CD8-positive, alpha-beta T cell (primary cell): ENCODE measurements at regions of chr14 and their contacts with region 1.

Region 1: GRCh38 chr14:23320774-23321571 is at the start of gene PABPN1:
- DNase-seq: peak; percentile 93 to 100 (median 97)
- ATAC-seq: peak; percentile 85
- H3K4me3 ChIP-seq: peak within 1 kb of the TSS; percentile 67 to 79
- H3K4me3 Mint-ChIP-seq: peak within 1 kb of the TSS; percentile 91
- H3K27ac ChIP-seq: peak within 1 kb of the TSS; percentile 80 to 96
- H3K27ac Mint-ChIP-seq: peak within 1 kb of the TSS; percentile 99
- H3K4me1 ChIP-seq: peaks cover 23% of the 10 kb centered on the region
- H3K4me1 Mint-ChIP-seq: peaks cover 29% of the 10 kb centered on the region
- H3K27me3 ChIP-seq: no peaks in the 10 kb centered on the region
- H3K27me3 Mint-ChIP-seq: no peaks in the 10 kb centered on the region
- CTCF ChIP-seq: no peak
- total RNA-seq, gene PABPN1: 186 to 191 TPM

Region 2: GRCh38 chr14:22766456-22767322 is 554.3 kb before region 1 on chr14 and contains the start of gene OXA1L:
- CTCF ChIA-PET with region 1: no interaction called
- POLR2A ChIA-PET with region 1: no interaction called
- intact Hi-C with region 1: loop called in 1 of 2 experiments (anchors 10 kb)
- DNase-seq: peak; percentile 88 to 99 (median 97)
- ATAC-seq: peak; percentile 92
- H3K4me3 ChIP-seq: peak within 1 kb of the TSS; percentile 93 to 99
- H3K4me3 Mint-ChIP-seq: peak within 1 kb of the TSS; percentile 94
- H3K27ac ChIP-seq: peak within 1 kb of the TSS; percentile 84 to 93
- H3K27ac Mint-ChIP-seq: peak within 1 kb of the TSS; percentile 96
- H3K4me1 ChIP-seq: peaks cover 22% of the 10 kb centered on the region
- H3K4me1 Mint-ChIP-seq: peaks cover 34% of the 10 kb centered on the region
- H3K27me3 ChIP-seq: no peaks in the 10 kb centered on the region
- H3K27me3 Mint-ChIP-seq: no peaks in the 10 kb centered on the region
- CTCF ChIP-seq: no peak
- total RNA-seq, gene OXA1L: 186 to 192 TPM

Region 3: DNA sequence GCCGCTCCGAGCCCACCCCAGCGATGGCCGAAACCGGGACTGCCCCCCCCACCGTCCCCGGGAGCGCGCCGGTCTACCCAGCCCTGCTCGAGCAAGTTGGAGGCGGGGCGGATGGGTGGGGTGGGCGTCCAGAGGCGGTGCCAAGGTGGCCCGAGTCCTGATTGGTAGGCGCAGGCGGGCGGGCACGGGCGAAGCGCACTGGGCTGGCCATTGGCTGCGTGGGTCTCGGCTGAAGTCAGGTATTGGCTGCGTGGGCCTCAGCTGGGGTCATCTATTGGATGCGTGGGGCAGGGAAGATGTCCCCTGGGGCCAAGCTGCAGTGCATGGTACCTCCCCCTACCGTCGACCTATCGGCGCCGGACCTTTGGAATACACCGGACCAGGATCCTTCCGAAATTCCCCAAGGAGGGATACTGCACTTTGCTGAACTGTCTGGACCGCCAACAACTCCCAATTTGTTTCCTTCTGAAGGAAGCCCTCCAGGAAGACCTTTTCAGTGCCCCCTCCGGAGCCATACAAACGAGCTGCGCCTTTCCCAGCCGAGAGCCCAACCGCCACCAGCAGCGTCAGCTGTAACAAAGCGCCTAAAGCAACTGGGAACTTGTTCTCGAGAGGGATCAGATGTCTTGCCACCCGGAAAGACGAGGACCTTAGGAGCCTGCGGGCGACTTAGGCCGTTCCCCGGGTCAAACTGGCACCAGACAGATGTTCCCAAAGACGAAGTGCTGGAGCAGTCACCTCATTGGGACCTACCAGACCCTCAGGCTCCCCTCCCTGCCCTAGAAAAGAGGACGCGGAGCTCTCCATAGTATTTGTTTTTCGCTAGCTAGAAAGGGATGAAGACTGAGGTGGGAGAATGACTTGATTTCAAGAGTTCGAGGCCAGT is 34.7 kb before region 1 on chr14 and contains the start of gene HOMEZ:
- CTCF ChIA-PET with region 1: interaction called, 7 read pairs
- POLR2A ChIA-PET with region 1: interaction called, 34 read pairs
- intact Hi-C with region 1: loop called (anchors 1 kb)
- DNase-seq: peak; percentile 94 to 98 (median 97)
- ATAC-seq: peak; percentile 96
- H3K4me3 ChIP-seq: peak within 1 kb of the TSS; percentile 89 to 94
- H3K4me3 Mint-ChIP-seq: peak within 1 kb of the TSS; percentile 99
- H3K27ac ChIP-seq: peak within 1 kb of the TSS; percentile 67 to 83
- H3K27ac Mint-ChIP-seq: peak within 1 kb of the TSS; percentile 96
- H3K4me1 ChIP-seq: peaks cover 20% of the 10 kb centered on the region
- H3K4me1 Mint-ChIP-seq: peaks cover 36% of the 10 kb centered on the region
- H3K27me3 ChIP-seq: no peaks in the 10 kb centered on the region
- H3K27me3 Mint-ChIP-seq: no peaks in the 10 kb centered on the region
- CTCF ChIP-seq: no peak
- total RNA-seq, gene HOMEZ: 3.1 to 4.0 TPM

Region 4: GRCh38 chr14:23306410-23307145 is 14.4 kb before region 1 on chr14 and contains the start of gene BCL2L2:
- CTCF ChIA-PET with region 1: interaction called, 53 read pairs
- POLR2A ChIA-PET with region 1: interaction called, 202 read pairs
- intact Hi-C with region 1: loop called (anchors 1 kb)
- DNase-seq: peak in 3 of 9 experiments; percentile 25 to 45 (median 27)
- ATAC-seq: no peak
- H3K4me3 ChIP-seq: peak within 1 kb of the TSS in 1 of 2 experiments; percentile 23
- H3K4me3 Mint-ChIP-seq: no peak within 1 kb of the TSS
- H3K27ac ChIP-seq: peak within 1 kb of the TSS in 1 of 2 experiments; percentile 52
- H3K27ac Mint-ChIP-seq: no peak within 1 kb of the TSS
- H3K4me1 ChIP-seq: peaks cover 6% of the 10 kb centered on the region
- H3K4me1 Mint-ChIP-seq: peaks cover 8% of the 10 kb centered on the region
- H3K27me3 ChIP-seq: peaks cover 0 to 3% of the 10 kb centered on the region in 2 experiments
- H3K27me3 Mint-ChIP-seq: peaks cover 28% of the 10 kb centered on the region
- CTCF ChIP-seq: no peak
- total RNA-seq, gene BCL2L2: 1.4 to 1.8 TPM

Region 5: GRCh38 chr14:23345987-23346692 is 25.2 kb after region 1 on chr14:
- CTCF ChIA-PET with region 1: no interaction called
- POLR2A ChIA-PET with region 1: no interaction called
- intact Hi-C with region 1: no loop called
- DNase-seq: no peak
- ATAC-seq: no peak
- H3K4me3 ChIP-seq: no peak overlapping the region
- H3K4me3 Mint-ChIP-seq: no peak overlapping the region
- H3K27ac ChIP-seq: no peak overlapping the region
- H3K27ac Mint-ChIP-seq: no peak overlapping the region
- H3K4me1 ChIP-seq: no peaks in the 10 kb centered on the region
- H3K4me1 Mint-ChIP-seq: peaks cover under 1% of the 10 kb centered on the region
- H3K27me3 ChIP-seq: no peaks in the 10 kb centered on the region
- H3K27me3 Mint-ChIP-seq: peaks cover 15% of the 10 kb centered on the region
- CTCF ChIP-seq: no peak

Region 6: GRCh38 chr14:23469127-23469905 is 148.3 kb after region 1 on chr14 and contains the start of gene NGDN:
- CTCF ChIA-PET with region 1: interaction called, 3 read pairs
- POLR2A ChIA-PET with region 1: interaction called, 6 read pairs
- intact Hi-C with region 1: loop called (anchors 1 to 2 kb)
- DNase-seq: peak; percentile 84 to 99 (median 93)
- ATAC-seq: peak; percentile 89
- H3K4me3 ChIP-seq: peak within 1 kb of the TSS; percentile 71 to 83
- H3K4me3 Mint-ChIP-seq: no peak within 1 kb of the TSS
- H3K27ac ChIP-seq: peak within 1 kb of the TSS; percentile 80 to 93
- H3K27ac Mint-ChIP-seq: peak within 1 kb of the TSS; percentile 6
- H3K4me1 ChIP-seq: peaks cover 16% of the 10 kb centered on the region
- H3K4me1 Mint-ChIP-seq: peaks cover 12% of the 10 kb centered on the region
- H3K27me3 ChIP-seq: no peaks in the 10 kb centered on the region
- H3K27me3 Mint-ChIP-seq: no peaks in the 10 kb centered on the region
- CTCF ChIP-seq: peak; percentile 83
- total RNA-seq, gene NGDN: 173 TPM

Region 7: DNA sequence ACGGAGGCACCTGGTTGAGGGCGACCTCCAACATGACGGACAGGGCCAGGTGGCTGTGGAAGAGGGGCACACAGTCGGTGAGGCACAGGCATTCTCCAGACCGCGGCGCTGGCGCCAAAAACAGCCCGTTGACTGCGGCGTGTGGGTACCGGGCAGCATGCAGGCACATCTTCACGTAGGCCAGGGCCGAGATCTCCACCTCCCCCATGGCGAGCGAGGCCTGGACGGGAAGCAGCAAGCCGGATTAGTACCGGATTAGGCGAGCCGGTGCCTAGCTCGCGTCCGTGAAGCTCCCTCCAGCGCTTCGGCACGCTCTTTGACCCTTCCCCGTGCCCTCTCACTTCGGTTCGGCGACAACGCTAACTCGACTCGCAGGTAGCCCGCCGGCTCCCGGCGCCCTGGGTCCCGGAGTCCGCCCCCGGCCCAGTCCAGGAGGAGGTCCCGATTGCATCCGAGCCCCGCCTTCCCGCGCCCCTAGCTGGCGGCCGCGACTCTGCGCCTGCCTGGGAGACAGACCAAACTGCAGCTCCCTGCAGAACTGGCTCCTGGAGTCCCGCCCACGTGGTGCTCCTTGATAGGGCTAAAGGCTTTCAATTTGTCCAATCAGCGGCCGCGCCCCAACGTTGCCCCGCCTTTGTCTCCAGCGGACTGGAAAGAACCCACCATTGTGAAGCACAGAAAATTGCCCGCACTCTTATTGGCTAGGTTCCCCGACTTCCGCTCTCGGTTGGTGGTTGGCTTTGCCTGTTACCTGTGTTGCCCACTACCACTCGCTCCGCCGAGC is 820.3 kb after region 1 on chr14 and contains the start of gene EMC9:
- CTCF ChIA-PET with region 1: no interaction called
- POLR2A ChIA-PET with region 1: no interaction called
- intact Hi-C with region 1: loop called in 1 of 2 experiments (anchors 10 kb)
- DNase-seq: peak; percentile 98 to 100 (median 99)
- ATAC-seq: peak; percentile 90
- H3K4me3 ChIP-seq: peak within 1 kb of the TSS; percentile 81 to 89
- H3K4me3 Mint-ChIP-seq: peak within 1 kb of the TSS; percentile 86
- H3K27ac ChIP-seq: peak within 1 kb of the TSS; percentile 49 to 74
- H3K27ac Mint-ChIP-seq: peak within 1 kb of the TSS; percentile 84
- H3K4me1 ChIP-seq: peaks cover 51% of the 10 kb centered on the region
- H3K4me1 Mint-ChIP-seq: peaks cover 73% of the 10 kb centered on the region
- H3K27me3 ChIP-seq: no peaks in the 10 kb centered on the region
- H3K27me3 Mint-ChIP-seq: no peaks in the 10 kb centered on the region
- CTCF ChIP-seq: no peak
- total RNA-seq, gene EMC9: 7.8 to 10.4 TPM

Region 8: GRCh38 chr14:24232121-24232644 is 911.2 kb after region 1 on chr14 and contains the start of gene NEDD8:
- CTCF ChIA-PET with region 1: no interaction called
- POLR2A ChIA-PET with region 1: no interaction called
- intact Hi-C with region 1: no loop called
- DNase-seq: peak; percentile 72 to 93 (median 89)
- ATAC-seq: peak; percentile 88
- H3K4me3 ChIP-seq: peak within 1 kb of the TSS; percentile 92 to 98
- H3K4me3 Mint-ChIP-seq: peak within 1 kb of the TSS; percentile 97
- H3K27ac ChIP-seq: peak within 1 kb of the TSS; percentile 72 to 87
- H3K27ac Mint-ChIP-seq: peak within 1 kb of the TSS; percentile 97
- H3K4me1 ChIP-seq: peaks cover 27% of the 10 kb centered on the region
- H3K4me1 Mint-ChIP-seq: peaks cover 59% of the 10 kb centered on the region
- H3K27me3 ChIP-seq: no peaks in the 10 kb centered on the region
- H3K27me3 Mint-ChIP-seq: no peaks in the 10 kb centered on the region
- CTCF ChIP-seq: no peak
- total RNA-seq, gene NEDD8: 39.9 to 48.5 TPM